Motor neuron (in vitro differentiated cells): ENCODE measurements at regions of chr4 and their contacts with region 1.

Region 1: GRCh38 chr4:52376132-52376704 is 282.9 kb downstream of the USP46 start:
- ATAC-seq: peak in 2 of 8 experiments; percentile 31 to 53
- H3K4me3 ChIP-seq: no peak overlapping the region
- H3K27ac ChIP-seq: no peak overlapping the region
- H3K4me1 ChIP-seq: no peaks in the 10 kb centered on the region

Region 2: GRCh38 chr4:52234561-52235440 is 141.4 kb before region 1 on chr4:
- in situ Hi-C with region 1: loop called in 1 of 9 experiments (anchors 10 kb)
- ATAC-seq: peak in 7 of 8 experiments; percentile 38 to 99 (median 56)
- H3K4me3 ChIP-seq: no peak overlapping the region
- H3K27ac ChIP-seq: no peak overlapping the region
- H3K4me1 ChIP-seq: peaks cover 0 to 2% of the 10 kb centered on the region in 2 donors

Region 3: GRCh38 chr4:52712172-52712990 is 336.2 kb after region 1 on chr4:
- in situ Hi-C with region 1: loop called in 1 of 9 experiments (anchors 25 kb)
- ATAC-seq: peak; percentile 94 to 99 (median 98)
- H3K4me3 ChIP-seq: peak overlapping the region; percentile 73 to 82 (median 74)
- H3K27ac ChIP-seq: peak overlapping the region; percentile 65 to 74
- H3K4me1 ChIP-seq: peaks cover 10 to 13% of the 10 kb centered on the region in 2 donors